Right cardiac atrium (tissue), 5 donors: ENCODE measurements at regions of chr18 and their contacts with region 1.

Region 1: GRCh38 chr18:24613896-24614640 is 153.6 kb downstream of the HRH4 start:
- DNase-seq: no peak
- ATAC-seq: no peak
- H3K4me3 ChIP-seq: no peak overlapping the region
- H3K27ac ChIP-seq: no peak overlapping the region
- H3K4me1 ChIP-seq: no peaks in the 10 kb centered on the region
- H3K27me3 ChIP-seq: no peaks in the 10 kb centered on the region

Region 2: DNA sequence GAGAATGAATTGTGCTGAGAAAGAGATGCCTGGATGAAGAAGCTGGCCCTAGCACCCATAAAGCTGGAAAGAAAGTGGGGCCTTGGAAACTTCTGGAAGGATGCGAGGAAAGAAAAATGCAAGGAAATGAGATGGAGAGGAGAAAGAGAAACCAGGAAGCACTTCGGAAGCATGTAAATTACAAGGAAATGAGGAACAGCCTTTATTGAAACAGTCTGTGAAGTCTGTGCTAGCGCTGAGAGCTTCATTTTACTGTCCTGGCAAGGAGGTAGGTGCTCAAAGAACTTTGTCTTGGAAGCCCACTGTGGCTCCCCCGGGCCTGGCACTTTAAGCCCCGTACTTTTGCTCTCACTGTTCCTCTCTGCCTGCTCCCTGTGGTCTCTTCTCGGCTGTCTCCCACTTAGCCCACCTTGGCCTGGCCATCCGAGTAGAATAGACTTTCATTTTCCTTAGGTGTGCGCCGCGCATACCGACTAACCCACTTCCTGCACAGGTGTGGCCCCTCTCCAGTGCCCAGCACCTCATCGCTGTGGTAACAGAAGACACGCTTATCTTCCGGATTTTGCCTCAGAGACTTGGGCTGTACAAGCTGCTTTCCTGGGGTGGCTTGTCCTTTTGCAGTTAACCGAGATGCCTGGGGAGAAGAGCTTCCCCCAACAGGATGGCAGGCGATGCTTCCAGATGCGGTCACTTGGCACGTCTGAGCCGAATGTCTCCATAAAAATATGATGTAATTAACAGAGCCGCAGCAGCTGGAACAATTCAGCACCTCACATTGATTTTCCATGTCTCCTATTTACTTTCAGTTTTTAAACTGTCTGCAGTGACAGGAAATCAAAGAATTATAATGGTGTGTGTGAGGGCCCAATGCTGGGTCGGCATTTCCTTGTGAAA is 46.0 kb after region 1 on chr18:
- intact Hi-C with region 1: loop called in 1 of 4 experiments (anchors 5 kb)
- DNase-seq: peak; percentile 65 to 85 (median 80)
- ATAC-seq: peak; percentile 66 to 75
- H3K4me3 ChIP-seq: peak overlapping the region; percentile 30
- H3K27ac ChIP-seq: peak overlapping the region; percentile 26
- H3K4me1 ChIP-seq: no peaks in the 10 kb centered on the region
- H3K27me3 ChIP-seq: no peaks in the 10 kb centered on the region